G401 (cell line): ENCODE measurements at regions of chr17 and their contacts with region 1.

Region 1: DNA sequence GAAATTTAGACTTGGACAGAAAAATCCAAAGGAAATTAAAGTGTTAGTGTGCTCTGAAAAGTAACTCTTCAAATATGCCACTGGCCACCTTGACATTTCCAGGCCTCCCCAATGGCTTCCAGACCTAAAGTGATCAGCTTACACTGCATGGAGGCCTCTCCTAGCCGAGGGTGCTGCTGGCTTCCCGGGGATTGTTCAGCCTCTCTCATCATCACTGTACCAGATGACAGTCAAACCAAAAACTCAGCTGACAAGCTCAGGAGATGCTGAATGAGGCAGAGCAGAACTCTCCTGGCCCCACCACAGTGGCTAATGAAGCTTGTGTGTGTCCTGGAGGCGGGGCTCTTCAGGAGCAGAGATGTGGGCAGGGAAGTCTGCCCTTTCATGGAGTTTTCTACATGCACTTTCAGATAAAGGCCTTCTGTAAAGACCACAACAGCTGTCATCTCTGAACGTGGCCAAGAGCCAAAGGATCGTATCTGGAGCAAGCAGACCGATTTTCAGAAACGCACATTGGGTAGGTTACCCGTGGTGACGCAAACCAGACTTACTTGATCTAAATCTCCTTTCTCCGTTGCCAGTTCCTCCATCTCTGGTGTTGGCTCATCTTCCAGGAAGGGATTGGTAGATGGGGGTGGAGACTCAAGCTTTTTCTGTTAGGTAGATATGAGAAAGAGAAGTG is 113.3 kb downstream of the VPS53 start:
- DNase-seq: peak; percentile 63

Region 2: GRCh38 chr17:199806-200540 is 401.4 kb before region 1 on chr17:
- in situ Hi-C with region 1: loop called (anchors 10 kb)
- DNase-seq: no peak

Region 3: DNA sequence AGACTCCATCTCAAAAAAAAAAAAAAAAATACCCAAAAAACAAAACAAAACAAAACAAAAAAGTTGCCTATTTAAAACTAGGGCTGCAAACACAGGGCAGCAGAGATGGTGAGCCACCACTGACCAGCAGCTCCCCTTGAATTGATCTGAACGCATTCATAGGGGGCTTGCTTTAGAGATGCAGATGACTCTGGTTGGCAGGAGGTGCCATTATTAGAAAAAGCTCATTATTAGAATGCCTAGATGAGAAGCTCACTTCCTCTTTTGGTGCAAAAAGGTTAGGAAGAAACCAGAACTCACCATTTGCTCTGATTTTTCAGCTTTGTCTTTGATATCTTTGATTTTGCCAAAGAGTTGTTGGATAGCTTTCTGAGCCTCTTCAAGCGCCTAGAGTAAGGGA is 60.1 kb after region 1 on chr17:
- in situ Hi-C with region 1: loop called (anchors 10 kb)
- DNase-seq: no peak

Region 4: GRCh38 chr17:740240-741017 is 139.0 kb after region 1 on chr17:
- in situ Hi-C with region 1: no loop called
- DNase-seq: no peak